ENCODE measurements at regions of chr11 and their contacts with region 1.

Region 1: DNA sequence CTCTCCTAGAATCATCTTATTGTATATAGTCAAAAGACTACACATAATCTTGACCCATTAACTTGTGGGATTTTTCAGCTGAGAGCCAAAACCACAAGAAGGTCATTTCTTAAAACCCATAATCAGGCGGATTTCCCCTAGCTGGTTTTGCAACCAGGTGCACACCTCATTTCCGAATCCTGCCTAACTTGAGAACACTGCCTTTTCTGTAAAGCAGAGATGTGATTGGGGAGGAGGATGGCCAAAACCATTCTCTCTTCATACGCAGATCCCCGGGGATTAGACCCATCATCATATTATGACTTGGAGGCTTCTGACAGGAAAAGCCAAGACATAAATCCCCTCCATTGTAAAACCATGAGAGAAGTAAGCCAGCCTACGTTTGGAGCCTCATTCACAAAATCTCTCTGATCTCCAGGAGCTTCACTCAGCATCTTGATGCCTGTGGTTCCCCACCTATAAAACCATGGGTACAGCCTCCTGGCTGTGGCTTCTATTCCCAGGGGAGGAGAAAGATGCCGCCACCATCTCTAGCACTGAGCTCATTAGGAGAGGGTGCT is 191.3 kb downstream of the KIF18A start:
- DNase-seq: no peak
- H3K4me3 ChIP-seq: no peak overlapping the region
- H3K27ac ChIP-seq: no peak overlapping the region
- H3K27me3 ChIP-seq: no peaks in the 10 kb centered on the region
- CTCF ChIP-seq: no peak

Region 2: DNA sequence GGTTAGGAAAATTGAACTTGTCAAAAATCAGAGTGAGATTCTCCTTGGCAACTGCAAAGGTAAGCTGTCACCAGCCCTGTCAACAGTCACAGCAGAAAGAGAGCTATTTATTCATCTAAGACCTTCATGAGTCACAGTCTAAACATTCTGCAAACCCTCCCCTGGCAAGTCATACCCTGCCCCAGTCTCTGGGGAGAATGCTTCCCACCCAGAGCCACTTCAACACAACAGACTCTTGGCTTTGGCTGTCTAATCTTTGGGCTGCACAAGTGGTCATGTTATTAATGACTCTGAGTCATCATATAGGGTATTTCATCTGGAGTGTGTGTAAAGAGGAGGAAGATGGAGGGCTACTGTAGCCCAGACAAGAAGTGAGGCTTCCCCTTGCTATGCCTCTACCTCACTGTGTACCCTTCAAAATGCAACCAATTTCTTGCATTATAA is 707.0 kb before region 1 on chr11:
- CTCF ChIA-PET with region 1: no interaction called
- POLR2A ChIA-PET with region 1: interaction called, 10 read pairs
- DNase-seq: no peak
- H3K4me3 ChIP-seq: no peak overlapping the region
- H3K27ac ChIP-seq: no peak overlapping the region
- H3K27me3 ChIP-seq: no peaks in the 10 kb centered on the region
- CTCF ChIP-seq: no peak